GM12878 (cell line): ENCODE measurements at regions of chr2 and their contacts with region 1.

Region 1: GRCh38 chr2:68121873-68122679 is 35.6 kb upstream of the PNO1 start:
- DNase-seq: peak; percentile 50
- ATAC-seq: peak; percentile 23; the same call in 2 of the 3 replicates
- H3K4me3 ChIP-seq: peak overlapping the region; percentile 56; the same call in 1 of the 2 replicates
- H3K27ac ChIP-seq: peak overlapping the region; percentile 85
- H3K4me1 ChIP-seq: peaks cover 35% of the 10 kb centered on the region
- H3K27me3 ChIP-seq: no peaks in the 10 kb centered on the region
- CTCF ChIP-seq: peak; percentile 93 to 97 (median 96)
- EP300 ChIP-seq: no peak
- POLR2A ChIP-seq: no peak
- RAD21 ChIP-seq: peak; percentile 97

Region 2: DNA sequence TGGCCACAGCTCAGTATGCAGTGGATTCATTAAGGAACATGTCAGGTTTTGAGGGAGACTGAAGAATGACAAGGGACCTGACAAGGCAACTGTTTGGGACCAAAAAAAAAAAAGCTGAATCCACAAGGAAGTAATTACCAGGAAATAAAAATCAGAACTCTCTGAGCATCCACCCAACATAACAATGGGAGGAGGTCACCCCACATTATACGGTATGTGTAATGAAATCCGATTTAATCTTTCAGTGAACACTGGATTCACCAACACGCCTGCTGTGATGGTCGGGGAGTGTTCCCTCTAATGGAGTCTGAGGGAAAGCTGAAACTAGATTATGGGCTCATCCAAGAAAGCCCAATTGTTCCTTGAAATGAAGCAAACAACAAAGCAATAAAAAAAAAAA is 395.7 kb before region 1 on chr2:
- CTCF ChIA-PET with region 1: no interaction called
- POLR2A ChIA-PET with region 1: no interaction called
- RAD21 ChIA-PET with region 1: no interaction called
- SMC1A ChIA-PET with region 1: no interaction called
- in situ Hi-C with region 1: no loop called
- intact Hi-C with region 1: no loop called
- DNase-seq: no peak
- ATAC-seq: no peak
- H3K4me3 ChIP-seq: no peak overlapping the region
- H3K27ac ChIP-seq: no peak overlapping the region
- H3K4me1 ChIP-seq: no peaks in the 10 kb centered on the region
- H3K27me3 ChIP-seq: 0 out of 4 replicates have a peak, but pooled peaks cover 0 to 2% of the 10 kb centered on the region in 2 experiments
- CTCF ChIP-seq: no peak
- EP300 ChIP-seq: no peak
- POLR2A ChIP-seq: no peak
- RAD21 ChIP-seq: no peak

Region 3: GRCh38 chr2:68134554-68134953 is 12.5 kb after region 1 on chr2:
- CTCF ChIA-PET with region 1: interaction called, 30 read pairs
- POLR2A ChIA-PET with region 1: no interaction called
- RAD21 ChIA-PET with region 1: interaction called, 8 read pairs
- SMC1A ChIA-PET with region 1: interaction called, 8 read pairs
- in situ Hi-C with region 1: no loop called
- intact Hi-C with region 1: no loop called
- DNase-seq: no peak
- ATAC-seq: no peak
- H3K4me3 ChIP-seq: no peak overlapping the region
- H3K27ac ChIP-seq: no peak overlapping the region
- H3K4me1 ChIP-seq: no peaks in the 10 kb centered on the region
- H3K27me3 ChIP-seq: no peaks in the 10 kb centered on the region
- CTCF ChIP-seq: no peak
- EP300 ChIP-seq: no peak
- POLR2A ChIP-seq: no peak
- RAD21 ChIP-seq: no peak

Region 4: DNA sequence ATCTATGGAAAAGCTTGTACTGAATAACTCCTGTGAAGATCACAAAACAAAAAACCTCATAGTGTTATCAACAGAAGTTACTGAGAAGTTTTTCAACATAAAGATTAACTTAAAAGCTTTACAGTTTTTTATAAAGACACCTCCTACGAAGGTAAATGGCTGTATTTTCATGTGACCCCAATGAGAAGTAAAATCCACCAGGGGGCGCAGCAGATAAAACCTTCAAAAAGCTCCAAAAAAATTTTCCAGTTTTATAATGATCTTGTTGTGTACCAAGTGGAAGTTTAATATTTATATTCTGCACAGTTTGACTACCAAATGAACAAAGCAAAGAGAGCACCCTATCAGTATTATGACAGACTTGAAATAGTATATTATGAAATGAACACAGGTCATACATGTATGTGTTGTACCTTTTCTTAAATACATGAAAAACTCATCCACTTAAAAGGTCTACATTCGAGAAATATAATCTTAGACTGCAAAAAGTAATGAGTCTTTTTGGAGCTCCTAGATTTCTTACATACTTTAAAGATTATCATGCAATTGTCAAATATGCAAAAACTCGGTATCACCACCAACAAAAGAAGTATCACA is 74.1 kb after region 1 on chr2:
- CTCF ChIA-PET with region 1: interaction called, 13 read pairs
- POLR2A ChIA-PET with region 1: no interaction called
- RAD21 ChIA-PET with region 1: interaction called, 4 read pairs
- SMC1A ChIA-PET with region 1: interaction called, 13 read pairs
- in situ Hi-C with region 1: no loop called
- intact Hi-C with region 1: no loop called
- DNase-seq: no peak
- ATAC-seq: peak; percentile 40; the same call in 2 of the 3 replicates
- H3K4me3 ChIP-seq: no peak overlapping the region
- H3K27ac ChIP-seq: no peak overlapping the region
- H3K4me1 ChIP-seq: peaks cover 3% of the 10 kb centered on the region; the same call in 1 of the 2 replicates
- H3K27me3 ChIP-seq: no peaks in the 10 kb centered on the region
- CTCF ChIP-seq: peak; percentile 33 to 39 (median 37); a peak in 5 of 6 replicates
- EP300 ChIP-seq: no peak
- POLR2A ChIP-seq: no peak
- RAD21 ChIP-seq: peak; percentile 61

Region 5: GRCh38 chr2:68251187-68251854 is 129.2 kb after region 1 on chr2:
- CTCF ChIA-PET with region 1: interaction called, 17 read pairs
- POLR2A ChIA-PET with region 1: interaction called, 3 read pairs
- RAD21 ChIA-PET with region 1: interaction called, 8 read pairs
- SMC1A ChIA-PET with region 1: interaction called, 14 read pairs
- in situ Hi-C with region 1: no loop called
- intact Hi-C with region 1: loop called (anchors 2 kb)
- DNase-seq: peak; percentile 64
- ATAC-seq: peak; percentile 70
- H3K4me3 ChIP-seq: peak overlapping the region; percentile 85
- H3K27ac ChIP-seq: peak overlapping the region; percentile 91
- H3K4me1 ChIP-seq: peaks cover 18% of the 10 kb centered on the region
- H3K27me3 ChIP-seq: no peaks in the 10 kb centered on the region
- CTCF ChIP-seq: peak; percentile 70 to 79 (median 76)
- EP300 ChIP-seq: no peak
- POLR2A ChIP-seq: no peak; the same call in 1 of the 2 replicates
- RAD21 ChIP-seq: peak; percentile 71

Region 6: GRCh38 chr2:68295516-68295915 is 173.4 kb after region 1 on chr2:
- CTCF ChIA-PET with region 1: interaction called, 45 read pairs
- POLR2A ChIA-PET with region 1: no interaction called
- RAD21 ChIA-PET with region 1: interaction called, 25 read pairs
- SMC1A ChIA-PET with region 1: interaction called, 12 read pairs
- in situ Hi-C with region 1: no loop called
- intact Hi-C with region 1: no loop called
- DNase-seq: no peak
- ATAC-seq: peak; percentile 79
- H3K4me3 ChIP-seq: no peak overlapping the region
- H3K27ac ChIP-seq: no peak overlapping the region
- H3K4me1 ChIP-seq: peaks cover 6% of the 10 kb centered on the region
- H3K27me3 ChIP-seq: no peaks in the 10 kb centered on the region
- CTCF ChIP-seq: no peak
- EP300 ChIP-seq: no peak
- POLR2A ChIP-seq: no peak
- RAD21 ChIP-seq: no peak

Region 7: GRCh38 chr2:68340226-68341061 is 218.4 kb after region 1 on chr2:
- CTCF ChIA-PET with region 1: no interaction called
- POLR2A ChIA-PET with region 1: no interaction called
- RAD21 ChIA-PET with region 1: no interaction called
- SMC1A ChIA-PET with region 1: no interaction called
- in situ Hi-C with region 1: no loop called
- intact Hi-C with region 1: no loop called
- DNase-seq: no peak
- ATAC-seq: no peak
- H3K4me3 ChIP-seq: no peak overlapping the region
- H3K27ac ChIP-seq: no peak overlapping the region
- H3K4me1 ChIP-seq: no peaks in the 10 kb centered on the region
- H3K27me3 ChIP-seq: peaks cover 0 to under 1% of the 10 kb centered on the region in 2 experiments; a peak in 2 of 4 replicates
- CTCF ChIP-seq: no peak
- EP300 ChIP-seq: no peak
- POLR2A ChIP-seq: no peak
- RAD21 ChIP-seq: no peak